ENCODE measurements at regions of chr10 and their contacts with region 1.

Region 1: GRCh38 chr10:97914837-97915211 is 65.2 kb downstream of the GOLGA7B start:
- DNase-seq: no peak
- H3K4me3 ChIP-seq: no peak overlapping the region
- H3K27me3 ChIP-seq: peaks cover 5% of the 10 kb centered on the region
- CTCF ChIP-seq: peak; percentile 92

Region 2: GRCh38 chr10:97903128-97904017 is 11.5 kb before region 1 on chr10:
- CTCF ChIA-PET with region 1: interaction called, 16 read pairs
- POLR2A ChIA-PET with region 1: no interaction called
- DNase-seq: no peak
- H3K4me3 ChIP-seq: no peak overlapping the region
- H3K27me3 ChIP-seq: peaks cover 10% of the 10 kb centered on the region
- CTCF ChIP-seq: no peak

Region 3: GRCh38 chr10:97927622-97928021 is 12.8 kb after region 1 on chr10:
- CTCF ChIA-PET with region 1: interaction called, 12 read pairs
- POLR2A ChIA-PET with region 1: no interaction called
- DNase-seq: no peak
- H3K4me3 ChIP-seq: no peak overlapping the region
- H3K27me3 ChIP-seq: peaks cover 1% of the 10 kb centered on the region; the same call in 1 of the 2 replicates
- CTCF ChIP-seq: no peak

Region 4: GRCh38 chr10:97943294-97943693 is 28.5 kb after region 1 on chr10:
- CTCF ChIA-PET with region 1: no interaction called
- POLR2A ChIA-PET with region 1: no interaction called
- DNase-seq: no peak
- H3K4me3 ChIP-seq: no peak overlapping the region
- H3K27me3 ChIP-seq: no peaks in the 10 kb centered on the region
- CTCF ChIP-seq: no peak

Region 5: DNA sequence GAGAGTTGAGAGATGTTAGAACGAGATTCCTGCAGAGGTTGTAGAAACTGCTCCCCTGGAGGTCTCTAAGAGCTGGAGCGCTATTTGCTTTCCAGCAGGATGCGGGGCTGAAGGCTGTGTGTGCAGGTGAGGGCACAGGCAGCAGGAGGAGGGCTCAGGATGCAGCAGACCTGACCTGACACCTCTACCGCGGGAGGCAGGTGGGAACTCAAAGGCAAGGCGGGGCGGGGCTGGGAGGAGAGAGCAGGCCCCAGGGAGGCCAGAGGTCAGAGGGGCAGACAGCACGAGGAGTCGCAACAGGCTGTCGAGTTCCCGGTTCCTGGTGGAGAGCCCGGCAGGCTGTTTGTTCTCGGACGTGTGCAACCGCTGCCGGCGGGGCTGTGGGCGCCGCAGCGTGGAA is 123.5 kb after region 1 on chr10:
- CTCF ChIA-PET with region 1: interaction called, 70 read pairs
- POLR2A ChIA-PET with region 1: no interaction called
- DNase-seq: no peak
- H3K4me3 ChIP-seq: no peak overlapping the region
- H3K27me3 ChIP-seq: peaks cover 12% of the 10 kb centered on the region
- CTCF ChIP-seq: no peak

Measured in BJ (cell line).